Sigmoid colon (tissue), 7 donors: ENCODE measurements at regions of chr13 and their contacts with region 1.

Region 1: DNA sequence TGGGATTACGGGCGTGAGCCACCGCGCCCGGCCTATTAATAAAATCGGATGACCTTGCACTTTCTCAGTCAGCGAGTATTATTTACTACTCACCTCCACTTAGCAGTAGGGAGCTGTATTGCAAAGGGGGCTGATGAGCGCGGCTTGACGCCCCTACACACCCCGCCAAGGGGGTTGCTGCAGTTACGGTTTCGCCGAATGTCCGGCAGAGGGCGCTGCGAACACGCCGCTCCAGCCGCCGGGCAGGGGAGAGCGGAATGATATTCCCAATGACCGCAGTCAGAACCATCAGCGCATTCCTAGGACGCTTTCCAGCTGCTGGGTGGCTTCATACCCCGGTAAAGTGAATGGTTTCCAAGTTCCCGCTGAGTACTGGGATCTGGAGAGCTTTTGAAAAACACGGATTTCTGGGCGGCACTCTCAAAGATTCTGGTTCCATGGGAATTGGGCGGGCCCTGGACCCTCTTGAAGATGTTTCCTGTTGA is 30.0 kb upstream of the TPT1 start:
- DNase-seq: peak; percentile 85
- H3K4me3 ChIP-seq: peak overlapping the region in 2 of 4 donors; percentile 13 to 36
- H3K27ac ChIP-seq: peak overlapping the region in 2 of 4 donors; percentile 3 to 49
- H3K4me1 ChIP-seq: peaks cover 0 to 11% (median 10%) of the 10 kb centered on the region in 4 donors
- H3K27me3 ChIP-seq: no peaks in the 10 kb centered on the region
- CTCF ChIP-seq: peak; percentile 79 to 93 (median 90)
- EP300 ChIP-seq: no peak
- POLR2A ChIP-seq: no peak

Region 2: GRCh38 chr13:45464687-45465453 is 93.9 kb after region 1 on chr13 and contains the start of gene COG3:
- intact Hi-C with region 1: loop called (anchors 2 kb)
- DNase-seq: peak; percentile 97
- H3K4me3 ChIP-seq: peak within 1 kb of the TSS; percentile 81 to 99 (median 90)
- H3K27ac ChIP-seq: peak within 1 kb of the TSS; percentile 90 to 96 (median 94)
- H3K4me1 ChIP-seq: peaks cover 0 to 36% (median 28%) of the 10 kb centered on the region in 4 donors
- H3K27me3 ChIP-seq: no peaks in the 10 kb centered on the region
- CTCF ChIP-seq: peak in 2 of 4 experiments; percentile 24 to 32
- EP300 ChIP-seq: peak in 1 of 4 donors; percentile 51
- POLR2A ChIP-seq: peak; percentile 74 to 82
- total RNA-seq, gene COG3: 24.9 to 30.0 (median 27.2) TPM